ENCODE measurements at regions of chr20 and their contacts with region 1.

Region 1: DNA sequence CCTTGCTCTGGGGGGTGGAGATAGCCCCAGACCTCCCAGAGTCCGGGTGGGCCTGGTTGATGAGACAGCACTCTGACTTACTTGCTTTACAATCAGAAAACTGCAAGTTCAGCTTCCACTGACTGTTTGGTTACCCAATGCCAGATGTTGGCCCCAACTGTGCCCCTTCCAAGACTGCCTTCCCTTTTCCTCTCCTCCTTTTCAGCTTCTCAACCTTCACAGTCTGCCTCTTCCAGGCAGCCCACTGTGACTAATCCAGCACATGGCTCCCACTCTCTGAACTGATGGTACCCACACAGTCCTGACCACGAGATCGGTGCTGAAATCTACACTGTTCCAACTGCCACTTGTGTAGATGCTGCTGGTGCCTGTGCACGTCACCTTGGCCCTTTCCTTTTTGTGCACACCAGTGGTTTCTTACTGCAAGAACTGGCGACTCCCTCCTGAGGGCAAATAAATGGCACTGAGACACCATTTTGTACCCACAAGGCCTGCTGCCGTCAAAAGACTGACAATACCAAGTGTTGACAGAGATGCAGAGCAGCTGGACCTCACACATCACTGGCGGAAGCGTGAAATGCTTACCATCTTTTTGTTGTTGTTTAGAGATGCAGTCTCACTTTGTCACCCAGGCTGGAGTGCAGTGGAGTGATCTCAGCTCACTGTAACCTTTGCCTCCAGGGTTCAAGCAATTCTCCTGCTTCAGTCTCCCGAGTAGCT is 1.8 kb upstream of the ARFGAP1 start:
- DNase-seq: no peak
- H3K4me3 Mint-ChIP-seq: peak overlapping the region; percentile 14
- H3K27ac Mint-ChIP-seq: no peak overlapping the region
- H3K4me1 Mint-ChIP-seq: peaks cover 13% of the 10 kb centered on the region
- H3K27me3 Mint-ChIP-seq: peaks cover 4% of the 10 kb centered on the region

Region 2: GRCh38 chr20:63216041-63216848 is 54.5 kb before region 1 on chr20 and contains the start of gene YTHDF1:
- intact Hi-C with region 1: loop called (anchors 1 kb)
- DNase-seq: peak; percentile 97
- H3K4me3 Mint-ChIP-seq: peak within 1 kb of the TSS; percentile 98
- H3K27ac Mint-ChIP-seq: peak within 1 kb of the TSS; percentile 88
- H3K4me1 Mint-ChIP-seq: peaks cover 32% of the 10 kb centered on the region
- H3K27me3 Mint-ChIP-seq: peaks cover 7% of the 10 kb centered on the region
- total RNA-seq, gene YTHDF1: 43.7 and 44.7 TPM in 2 replicates

Region 3: DNA sequence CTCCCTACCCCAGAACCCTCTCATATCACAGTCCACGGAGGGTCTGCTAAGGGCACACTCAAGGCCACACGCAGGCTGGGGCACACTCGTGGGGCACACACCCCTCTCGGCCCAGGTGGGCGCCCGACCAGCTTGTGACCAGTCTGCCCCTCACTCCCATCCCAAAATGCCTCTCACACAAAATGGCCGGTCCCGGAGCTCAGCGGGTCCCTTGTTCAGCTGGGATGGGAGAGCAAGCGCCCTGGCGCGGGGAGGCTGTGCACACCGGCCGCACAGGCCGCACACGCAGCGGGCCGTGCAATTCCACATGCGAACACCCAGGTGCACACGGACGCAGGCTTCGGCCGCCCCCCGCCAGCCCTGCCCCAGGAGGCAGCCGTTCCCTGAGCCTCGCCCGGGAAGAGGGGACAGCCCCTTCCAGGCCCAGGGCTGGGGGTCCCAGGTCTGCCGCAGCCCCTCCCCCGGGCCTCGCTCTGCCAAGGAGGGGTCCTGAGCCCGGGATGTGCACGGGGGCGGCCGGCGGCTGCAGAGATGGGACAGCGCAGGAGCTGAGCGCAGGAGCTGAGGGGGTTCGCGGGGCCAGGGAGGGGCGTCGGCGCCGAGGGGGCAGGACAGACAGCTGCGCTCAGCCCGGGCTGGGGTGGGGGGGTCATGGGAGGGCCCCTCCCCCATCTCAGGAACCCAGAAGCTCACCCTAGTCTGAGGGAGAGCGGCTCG is 200.4 kb after region 1 on chr20:
- intact Hi-C with region 1: no loop called
- DNase-seq: no peak
- H3K4me3 Mint-ChIP-seq: no peak overlapping the region
- H3K27ac Mint-ChIP-seq: no peak overlapping the region
- H3K4me1 Mint-ChIP-seq: no peaks in the 10 kb centered on the region
- H3K27me3 Mint-ChIP-seq: peaks cover 27% of the 10 kb centered on the region

Measured in activated T-helper 2 cell treated with anti-CD3 and anti-CD28 coated beads, Interferon-gamma antibody, Interleukin-2, Interleukin-4, amounts not matched to agents 10 μg/mL and 5 μg/mL and 100 μg/mL, durations not matched to agents 14 hours and 24 hours and 36 hours (primary cell).